ENCODE measurements at regions of chr9 and their contacts with region 1.

Region 1: GRCh38 chr9:135561391-135562234 is at the start of gene PAEP:
- DNase-seq: no peak
- H3K4me3 ChIP-seq: no peak within 1 kb of the TSS
- H3K27ac ChIP-seq: no peak within 1 kb of the TSS
- H3K4me1 ChIP-seq: no peaks in the 10 kb centered on the region
- H3K27me3 ChIP-seq: peaks cover 79% of the 10 kb centered on the region
- CTCF ChIP-seq: no peak
- total RNA-seq, gene PAEP: not detected in 2 replicates

Region 2: GRCh38 chr9:135229701-135230385 is 331.8 kb before region 1 on chr9:
- CTCF ChIA-PET with region 1: no interaction called
- POLR2A ChIA-PET with region 1: interaction called, 19 read pairs
- intact Hi-C with region 1: no loop called
- DNase-seq: no peak
- H3K4me3 ChIP-seq: no peak overlapping the region
- H3K27ac ChIP-seq: no peak overlapping the region
- H3K4me1 ChIP-seq: no peaks in the 10 kb centered on the region
- H3K27me3 ChIP-seq: peaks cover 51% of the 10 kb centered on the region
- CTCF ChIP-seq: no peak